IMR-90 (cell line): ENCODE measurements at regions of chr12 and their contacts with region 1.

Region 1: GRCh38 chr12:65986047-65986446 is 144.5 kb downstream of the LLPH start:
- DNase-seq: no peak
- ATAC-seq: no peak
- H3K4me3 ChIP-seq: no peak overlapping the region
- H3K27ac ChIP-seq: no peak overlapping the region
- H3K4me1 ChIP-seq: no peaks in the 10 kb centered on the region
- H3K27me3 ChIP-seq: no peaks in the 10 kb centered on the region
- CTCF ChIP-seq: no peak
- POLR2A ChIP-seq: no peak
- RAD21 ChIP-seq: no peak

Region 2: GRCh38 chr12:65740873-65741600 is 245.0 kb before region 1 on chr12:
- CTCF ChIA-PET with region 1: no interaction called
- POLR2A ChIA-PET with region 1: no interaction called
- dilution Hi-C with region 1: no loop called
- in situ Hi-C with region 1: no loop called
- intact Hi-C with region 1: loop called (anchors 10 kb)
- DNase-seq: peak; percentile 74
- ATAC-seq: peak; percentile 98
- H3K4me3 ChIP-seq: peak overlapping the region; percentile 83
- H3K27ac ChIP-seq: peak overlapping the region; percentile 76
- H3K4me1 ChIP-seq: peaks cover 2% of the 10 kb centered on the region; the same call in 1 of the 2 replicates
- H3K27me3 ChIP-seq: no peaks in the 10 kb centered on the region
- CTCF ChIP-seq: no peak
- POLR2A ChIP-seq: peak; percentile 52; the same call in 1 of the 2 replicates
- RAD21 ChIP-seq: no peak

Region 3: GRCh38 chr12:65881965-65882413 is 104.1 kb before region 1 on chr12:
- CTCF ChIA-PET with region 1: no interaction called
- POLR2A ChIA-PET with region 1: no interaction called
- dilution Hi-C with region 1: no loop called
- in situ Hi-C with region 1: no loop called
- intact Hi-C with region 1: loop called (anchors 2 kb)
- DNase-seq: peak; percentile 38
- ATAC-seq: no peak
- H3K4me3 ChIP-seq: no peak overlapping the region
- H3K27ac ChIP-seq: peak overlapping the region; percentile 70; the same call in 1 of the 2 replicates
- H3K4me1 ChIP-seq: peaks cover 29% of the 10 kb centered on the region
- H3K27me3 ChIP-seq: no peaks in the 10 kb centered on the region
- CTCF ChIP-seq: 0 out of 2 replicates have a peak, but pooled peaks have one; percentile 1
- POLR2A ChIP-seq: no peak
- RAD21 ChIP-seq: no peak

Region 4: DNA sequence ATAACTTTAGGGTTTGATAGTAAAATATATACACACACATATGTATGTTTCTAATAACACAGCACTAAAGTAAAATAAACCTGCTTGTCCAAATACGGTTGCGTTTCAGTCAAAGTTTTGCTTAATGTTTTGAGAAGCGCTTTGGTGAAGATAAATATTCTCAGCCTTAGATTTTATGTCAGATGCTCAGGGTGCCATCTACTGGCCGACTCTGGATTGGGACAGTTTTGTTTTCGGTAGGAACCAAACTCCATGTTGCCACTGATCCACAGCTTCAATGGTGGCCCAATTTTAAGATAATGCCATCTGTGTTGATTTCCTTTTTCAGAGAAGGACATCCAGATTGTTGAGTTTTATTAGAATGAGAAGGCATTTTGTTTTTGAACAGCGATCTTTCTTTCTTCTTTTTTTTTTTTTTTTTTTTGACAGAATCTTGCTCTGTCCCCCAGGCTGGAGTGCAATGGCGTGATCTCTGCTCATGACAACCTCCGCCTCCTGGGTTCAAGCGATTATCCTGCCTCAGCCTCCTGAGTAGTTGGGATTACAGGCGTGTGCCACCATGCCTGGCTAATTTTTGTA is 101.4 kb after region 1 on chr12:
- CTCF ChIA-PET with region 1: no interaction called
- POLR2A ChIA-PET with region 1: no interaction called
- dilution Hi-C with region 1: no loop called
- in situ Hi-C with region 1: no loop called
- intact Hi-C with region 1: loop called (anchors 5 kb)
- DNase-seq: peak; percentile 88
- ATAC-seq: peak; percentile 93
- H3K4me3 ChIP-seq: no peak overlapping the region
- H3K27ac ChIP-seq: no peak overlapping the region
- H3K4me1 ChIP-seq: peaks cover 4% of the 10 kb centered on the region
- H3K27me3 ChIP-seq: no peaks in the 10 kb centered on the region
- CTCF ChIP-seq: peak; percentile 89
- POLR2A ChIP-seq: peak; percentile 30; the same call in 1 of the 2 replicates
- RAD21 ChIP-seq: peak; percentile 91